GM12878 (cell line): ENCODE measurements at regions of chr7 and their contacts with region 1.

Region 1: GRCh38 chr7:28389504-28390395 is 22.6 kb upstream of the CREB5 start:
- DNase-seq: no peak
- ATAC-seq: peak; percentile 64
- H3K4me3 ChIP-seq: no peak overlapping the region
- H3K27ac ChIP-seq: no peak overlapping the region
- H3K4me1 ChIP-seq: no peaks in the 10 kb centered on the region
- H3K27me3 ChIP-seq: no peaks in the 10 kb centered on the region
- CTCF ChIP-seq: peak; percentile 56 to 71 (median 61)
- EP300 ChIP-seq: no peak
- POLR2A ChIP-seq: no peak
- RAD21 ChIP-seq: peak; percentile 86

Region 2: DNA sequence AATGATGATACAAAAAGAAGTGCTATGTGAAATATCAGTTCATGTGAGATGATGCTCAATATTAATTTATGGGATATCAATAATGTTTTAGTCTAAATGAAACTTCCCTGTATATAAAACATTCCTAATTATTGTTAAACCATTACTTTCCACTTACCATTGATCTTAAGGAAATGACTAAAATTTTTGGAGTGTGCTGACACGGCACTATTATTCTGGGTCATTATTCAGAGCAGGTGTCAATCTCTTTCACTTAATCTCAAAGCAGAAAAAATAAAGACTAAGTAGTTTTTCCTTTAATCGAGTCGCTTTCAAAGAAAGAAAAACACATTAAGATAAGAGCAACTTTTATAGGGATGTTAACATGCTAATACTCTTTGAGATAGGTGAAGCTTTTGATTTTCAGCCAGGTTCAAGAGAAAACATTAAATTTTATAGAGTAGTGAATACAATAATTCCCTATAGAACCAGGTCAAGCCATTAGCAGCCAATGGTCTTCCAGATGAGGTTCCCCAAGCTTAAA is 11.1 kb after region 1 on chr7:
- CTCF ChIA-PET with region 1: interaction called, 11 read pairs
- POLR2A ChIA-PET with region 1: no interaction called
- RAD21 ChIA-PET with region 1: interaction called, 7 read pairs
- SMC1A ChIA-PET with region 1: interaction called, 5 read pairs
- in situ Hi-C with region 1: no loop called
- intact Hi-C with region 1: no loop called
- DNase-seq: no peak
- ATAC-seq: no peak
- H3K4me3 ChIP-seq: no peak overlapping the region
- H3K27ac ChIP-seq: no peak overlapping the region
- H3K4me1 ChIP-seq: no peaks in the 10 kb centered on the region
- H3K27me3 ChIP-seq: 0 out of 4 replicates have a peak, but pooled peaks cover 0 to 2% of the 10 kb centered on the region in 2 experiments
- CTCF ChIP-seq: no peak
- EP300 ChIP-seq: no peak
- POLR2A ChIP-seq: no peak
- RAD21 ChIP-seq: no peak

Region 3: DNA sequence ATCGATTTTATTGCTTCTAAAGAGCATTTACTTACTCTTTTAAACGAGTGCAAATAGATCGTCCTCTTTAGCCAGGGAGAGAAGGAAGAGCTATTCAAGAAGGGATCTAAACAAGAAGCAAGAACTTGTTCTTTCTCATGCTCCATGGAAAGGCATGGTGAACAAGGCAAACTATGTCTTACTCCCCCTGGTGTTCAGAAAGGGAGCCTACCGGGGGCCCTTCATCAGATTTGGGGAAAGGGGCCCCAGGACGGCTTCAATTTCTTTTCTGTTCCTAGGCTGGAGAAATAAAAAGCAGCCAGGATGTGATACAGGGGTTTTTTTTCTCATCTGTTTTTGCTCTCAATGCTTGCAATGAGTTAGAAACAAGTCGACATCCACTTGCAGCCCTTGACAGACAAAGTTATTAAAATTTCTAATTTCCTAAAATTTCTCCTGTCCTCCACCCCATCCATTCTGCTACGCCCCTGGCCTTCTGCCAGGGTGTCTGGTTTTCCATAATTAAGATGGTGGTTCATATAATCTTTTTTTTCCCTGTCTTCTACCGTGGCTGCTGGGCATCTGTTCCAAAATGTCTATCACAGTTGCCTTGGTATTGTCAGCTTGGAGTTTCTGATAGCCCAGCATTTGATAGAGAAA is 237.0 kb after region 1 on chr7:
- CTCF ChIA-PET with region 1: interaction called, 18 read pairs
- POLR2A ChIA-PET with region 1: no interaction called
- RAD21 ChIA-PET with region 1: interaction called, 7 read pairs
- SMC1A ChIA-PET with region 1: interaction called, 8 read pairs
- in situ Hi-C with region 1: loop called (anchors 10 kb)
- intact Hi-C with region 1: loop called (anchors 1 kb)
- DNase-seq: no peak
- ATAC-seq: peak; percentile 57
- H3K4me3 ChIP-seq: no peak overlapping the region
- H3K27ac ChIP-seq: no peak overlapping the region
- H3K4me1 ChIP-seq: peaks cover 3% of the 10 kb centered on the region; the same call in 1 of the 2 replicates
- H3K27me3 ChIP-seq: no peaks in the 10 kb centered on the region
- CTCF ChIP-seq: peak; percentile 50 to 70 (median 67)
- EP300 ChIP-seq: no peak
- POLR2A ChIP-seq: no peak
- RAD21 ChIP-seq: peak; percentile 74